ENCODE measurements at regions of chrX and their contacts with region 1.

Region 1: DNA sequence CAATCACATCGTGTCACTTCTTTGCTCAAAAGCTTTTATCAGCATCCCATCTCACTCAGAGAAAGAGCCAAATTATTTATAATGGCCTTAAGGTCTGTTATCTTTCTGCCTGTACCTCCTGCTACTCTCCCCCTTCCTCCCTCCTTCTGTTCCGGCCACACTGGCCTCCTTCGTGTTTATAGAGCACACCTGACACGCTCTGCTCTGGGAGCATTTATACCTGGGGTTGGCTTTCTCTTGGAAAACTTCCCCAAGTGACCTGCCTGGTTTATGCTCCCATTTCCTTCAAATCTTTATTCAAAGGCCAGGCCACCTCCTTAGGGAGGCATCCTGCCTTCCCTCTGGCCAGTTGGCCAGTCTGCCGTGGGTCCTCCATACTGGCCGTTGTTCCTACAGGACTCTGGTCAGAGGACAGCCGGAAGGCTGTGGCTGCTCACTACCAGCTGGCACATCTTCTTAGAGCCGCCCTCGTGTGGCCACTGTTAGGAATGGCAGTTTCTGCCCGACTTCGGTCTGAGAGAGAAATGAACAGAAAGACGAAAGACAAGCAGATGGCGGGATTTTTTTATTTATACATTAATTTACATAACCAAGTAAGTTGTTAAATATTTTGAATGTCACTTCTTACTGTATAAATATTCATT is 80.2 kb upstream of the CBLL2 start:
- DNase-seq: peak; percentile 17
- H3K4me3 Mint-ChIP-seq: no peak overlapping the region
- H3K27ac Mint-ChIP-seq: no peak overlapping the region
- H3K4me1 Mint-ChIP-seq: peaks cover 5% of the 10 kb centered on the region
- H3K27me3 Mint-ChIP-seq: no peaks in the 10 kb centered on the region

Region 2: GRCh38 chrX:22069586-22069985 is 123.0 kb before region 1 on chrX:
- intact Hi-C with region 1: no loop called
- DNase-seq: no peak
- H3K4me3 Mint-ChIP-seq: no peak overlapping the region
- H3K27ac Mint-ChIP-seq: no peak overlapping the region
- H3K4me1 Mint-ChIP-seq: peaks cover 6% of the 10 kb centered on the region
- H3K27me3 Mint-ChIP-seq: no peaks in the 10 kb centered on the region

Region 3: DNA sequence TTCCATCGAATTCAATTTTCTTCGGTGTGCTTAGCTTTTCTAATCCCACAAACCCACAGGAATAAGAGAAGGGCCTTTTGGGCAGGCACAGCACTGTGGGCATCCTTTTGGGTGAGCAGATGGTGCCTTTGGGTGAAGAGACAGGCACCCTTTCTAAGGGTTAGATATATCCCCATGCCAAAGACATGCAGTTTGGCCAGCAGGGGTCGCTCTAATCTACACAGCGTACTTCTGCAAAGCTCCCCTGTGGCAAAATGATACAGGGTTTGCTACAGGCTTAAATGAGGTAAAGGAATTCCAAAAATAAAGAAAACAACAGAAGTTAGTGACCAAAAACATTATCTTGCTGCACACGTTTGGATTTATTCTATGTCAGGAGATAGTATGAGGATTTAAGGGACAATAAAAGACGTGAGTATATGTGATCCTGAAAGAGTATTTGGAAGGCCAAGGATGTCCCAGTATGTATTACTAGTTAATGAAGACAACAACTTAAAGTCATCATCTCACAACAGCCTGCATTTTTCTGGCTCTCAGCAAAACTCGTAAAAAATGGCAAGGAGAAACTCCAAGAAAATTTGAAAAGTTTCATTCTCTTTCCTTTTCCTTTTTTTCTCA is 111.0 kb before region 1 on chrX:
- intact Hi-C with region 1: loop called (anchors 2 kb)
- DNase-seq: peak; percentile 2
- H3K4me3 Mint-ChIP-seq: no peak overlapping the region
- H3K27ac Mint-ChIP-seq: peak overlapping the region; percentile 42
- H3K4me1 Mint-ChIP-seq: peaks cover 7% of the 10 kb centered on the region
- H3K27me3 Mint-ChIP-seq: no peaks in the 10 kb centered on the region

Region 4: DNA sequence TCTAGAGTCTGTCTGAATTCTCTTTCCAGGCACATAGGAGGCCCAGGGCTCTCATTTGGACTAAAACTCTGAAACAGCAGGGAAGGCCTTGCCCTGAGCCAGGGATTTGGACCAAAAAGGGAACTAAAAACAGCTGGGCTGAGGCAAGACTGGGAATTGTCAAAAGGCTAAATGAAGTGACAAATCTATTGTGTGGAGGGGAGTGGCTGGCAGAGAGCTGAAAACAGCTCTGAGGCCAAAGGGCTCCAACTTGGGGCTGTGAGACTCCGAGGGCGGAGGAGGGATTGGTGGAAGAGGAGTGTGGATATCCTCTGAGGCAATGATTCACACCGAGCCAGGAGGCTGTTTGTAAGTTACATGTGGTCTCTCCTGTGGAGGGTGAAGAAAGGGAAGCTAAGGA is 97.3 kb before region 1 on chrX:
- intact Hi-C with region 1: no loop called
- DNase-seq: no peak
- H3K4me3 Mint-ChIP-seq: no peak overlapping the region
- H3K27ac Mint-ChIP-seq: no peak overlapping the region
- H3K4me1 Mint-ChIP-seq: peaks cover 5% of the 10 kb centered on the region
- H3K27me3 Mint-ChIP-seq: no peaks in the 10 kb centered on the region

Region 5: GRCh38 chrX:22135994-22136684 is 56.4 kb before region 1 on chrX:
- intact Hi-C with region 1: loop called (anchors 2 kb)
- DNase-seq: no peak
- H3K4me3 Mint-ChIP-seq: no peak overlapping the region
- H3K27ac Mint-ChIP-seq: peak overlapping the region; percentile 33
- H3K4me1 Mint-ChIP-seq: peaks cover 21% of the 10 kb centered on the region
- H3K27me3 Mint-ChIP-seq: no peaks in the 10 kb centered on the region

Region 6: DNA sequence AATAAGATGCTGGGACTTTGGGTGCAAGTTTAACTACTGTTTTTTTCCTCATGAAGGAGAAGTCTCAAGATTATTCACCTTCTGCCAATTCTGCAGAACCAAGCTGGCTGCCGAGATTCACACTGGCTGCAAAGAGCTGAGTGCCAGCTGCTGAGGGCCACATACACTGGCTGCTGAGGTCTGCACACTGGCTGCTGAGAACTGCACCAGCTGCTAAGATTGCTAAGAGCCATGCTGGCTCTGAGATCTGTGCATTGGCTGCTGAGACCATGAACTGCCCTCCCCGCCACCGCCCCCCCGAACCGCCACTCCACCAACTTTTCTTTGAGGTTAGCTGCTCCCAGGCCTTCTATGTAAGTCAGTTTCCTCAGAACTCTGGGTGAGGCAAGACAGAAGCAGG is 410.5 kb after region 1 on chrX:
- intact Hi-C with region 1: no loop called
- DNase-seq: no peak
- H3K4me3 Mint-ChIP-seq: no peak overlapping the region
- H3K27ac Mint-ChIP-seq: no peak overlapping the region
- H3K4me1 Mint-ChIP-seq: no peaks in the 10 kb centered on the region
- H3K27me3 Mint-ChIP-seq: no peaks in the 10 kb centered on the region

Region 7: GRCh38 chrX:22748093-22748999 is 555.8 kb after region 1 on chrX:
- intact Hi-C with region 1: loop called (anchors 5 kb)
- DNase-seq: peak; percentile 1
- H3K4me3 Mint-ChIP-seq: no peak overlapping the region
- H3K27ac Mint-ChIP-seq: no peak overlapping the region
- H3K4me1 Mint-ChIP-seq: no peaks in the 10 kb centered on the region
- H3K27me3 Mint-ChIP-seq: no peaks in the 10 kb centered on the region